GM13977 (cell line): ENCODE measurements at regions of chr6 and their contacts with region 1.

Region 1: GRCh38 chr6:50816115-50816675 is 2.5 kb upstream of the TFAP2B start:
- DNase-seq: peak; percentile 77
- CTCF ChIP-seq: peak; percentile 77

Region 2: DNA sequence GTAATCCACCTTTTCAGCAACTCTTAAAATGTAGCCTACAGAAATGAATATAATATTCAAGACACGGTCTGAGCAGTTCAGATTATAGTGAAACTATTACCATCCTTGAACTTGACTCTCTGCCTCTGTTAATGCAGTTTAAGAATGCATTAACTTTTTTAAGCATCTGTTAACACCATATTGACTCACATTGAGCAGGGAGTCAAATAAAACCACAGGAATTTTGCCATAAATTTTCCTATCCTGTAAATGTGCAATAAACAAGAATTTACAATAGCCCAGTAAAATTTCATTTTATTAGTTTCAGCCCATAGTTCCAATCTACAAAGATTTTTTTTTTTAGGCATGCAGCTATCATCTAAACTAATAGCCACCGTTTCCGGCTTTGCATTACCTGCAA is 527.3 kb before region 1 on chr6:
- in situ Hi-C with region 1: no loop called
- DNase-seq: no peak
- CTCF ChIP-seq: no peak

Region 3: DNA sequence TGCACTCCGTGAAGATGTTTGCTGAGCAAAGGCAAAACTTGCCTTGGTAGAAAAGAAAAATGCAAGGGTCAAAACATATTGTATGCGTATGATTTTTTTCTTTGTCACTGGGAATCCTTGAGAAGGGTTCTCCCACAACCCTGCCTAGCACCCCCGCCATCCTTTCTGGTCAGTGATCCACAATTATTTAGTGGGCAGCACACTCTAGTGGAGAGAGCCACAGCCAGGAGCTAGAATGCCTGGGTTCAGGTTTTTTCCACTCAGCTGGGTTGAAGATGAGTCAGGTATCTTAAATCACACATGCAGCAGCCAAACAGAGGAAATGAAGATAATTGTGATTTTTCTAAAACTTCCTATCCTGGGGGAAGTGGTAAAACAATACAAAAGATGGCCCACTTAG is 1028.1 kb after region 1 on chr6:
- in situ Hi-C with region 1: loop called (anchors 25 kb)
- DNase-seq: no peak
- CTCF ChIP-seq: peak; percentile 25

Region 4: DNA sequence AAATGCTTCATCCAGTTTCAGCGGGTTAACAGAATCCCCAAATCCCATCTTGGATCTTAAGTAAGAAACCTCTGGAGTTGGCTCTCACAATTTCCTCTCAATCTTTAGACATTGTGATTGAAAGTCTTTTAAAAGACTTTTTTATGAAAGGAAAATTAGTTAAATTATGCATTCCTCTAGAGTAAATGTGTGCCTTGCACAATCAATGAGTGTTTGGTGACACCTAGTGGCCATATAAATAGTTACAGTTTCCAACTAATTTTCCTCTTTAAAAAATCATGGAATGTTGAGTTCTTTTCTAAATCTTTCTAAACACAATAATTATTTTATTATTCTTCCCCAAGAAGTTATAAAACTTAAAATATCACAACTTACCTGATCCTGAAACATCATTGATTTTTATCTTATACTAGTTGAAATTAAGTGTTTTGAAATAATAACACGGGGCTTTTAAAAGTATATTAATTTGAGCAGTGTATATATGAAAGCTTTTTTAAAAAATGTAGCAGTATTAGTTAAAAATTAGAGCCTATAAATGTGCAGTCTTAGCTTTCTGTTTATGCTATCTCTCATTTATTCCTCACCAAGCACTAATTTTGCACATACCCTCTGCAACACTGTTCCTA is 1204.9 kb after region 1 on chr6:
- in situ Hi-C with region 1: loop called (anchors 25 kb)
- DNase-seq: no peak
- CTCF ChIP-seq: peak; percentile 59